ENCODE measurements at regions of chr17 and their contacts with region 1.

Region 1: GRCh38 chr17:76199469-76199868 is 40.8 kb downstream of the RNF157 start:
- DNase-seq: peak; percentile 39 to 93 (median 64)
- ATAC-seq: peak; percentile 98
- H3K4me3 ChIP-seq: no peak overlapping the region
- H3K4me3 Mint-ChIP-seq: peak overlapping the region; percentile 81
- H3K27ac ChIP-seq: peak overlapping the region in 1 of 2 donors; percentile 58
- H3K27ac Mint-ChIP-seq: peak overlapping the region; percentile 93
- H3K4me1 ChIP-seq: peaks cover 67% of the 10 kb centered on the region
- H3K4me1 Mint-ChIP-seq: peaks cover 71% of the 10 kb centered on the region
- H3K27me3 ChIP-seq: no peaks in the 10 kb centered on the region
- H3K27me3 Mint-ChIP-seq: no peaks in the 10 kb centered on the region
- CTCF ChIP-seq: no peak

Region 2: DNA sequence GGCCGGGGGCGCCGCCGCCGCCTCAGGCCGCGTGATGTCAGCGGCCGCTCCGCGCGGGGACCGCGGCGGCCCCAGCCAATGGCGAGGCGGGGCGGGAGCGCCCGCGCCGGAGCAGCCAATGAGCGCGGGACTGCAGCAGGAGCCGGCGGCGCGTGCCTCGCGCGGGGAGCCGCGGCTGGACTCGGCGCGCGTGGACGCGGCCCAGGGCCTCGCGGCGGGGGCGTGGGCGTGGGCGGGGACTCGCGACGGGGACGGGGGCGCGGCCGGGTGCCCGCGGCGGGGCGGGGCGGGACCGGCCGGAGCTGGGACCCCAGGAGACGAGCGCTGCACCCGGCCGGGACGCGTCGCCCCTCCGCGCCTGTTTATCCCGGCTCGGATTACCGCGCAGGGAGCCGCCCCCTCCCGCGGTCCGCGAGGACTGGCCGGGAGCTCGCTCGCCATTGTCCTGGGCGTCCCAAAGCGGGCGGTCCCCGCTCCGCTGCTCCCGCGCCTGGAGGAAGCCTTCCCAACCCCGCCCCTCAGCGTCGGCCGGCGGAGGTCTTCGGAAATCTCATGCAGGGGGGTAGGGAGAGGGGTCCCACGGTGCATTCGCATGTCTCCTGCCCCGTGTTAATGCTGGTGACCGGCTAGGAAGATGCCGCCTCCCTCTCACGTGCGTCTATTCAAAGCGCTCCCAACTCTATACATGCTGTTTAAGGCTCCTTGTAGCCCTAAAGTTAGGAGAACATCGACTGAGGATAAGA is 41.2 kb after region 1 on chr17 and contains the start of gene RNF157:
- CTCF ChIA-PET with region 1: interaction called, 4 read pairs
- POLR2A ChIA-PET with region 1: interaction called, 12 read pairs
- intact Hi-C with region 1: loop called (anchors 5 kb)
- DNase-seq: peak; percentile 39 to 90 (median 64)
- ATAC-seq: peak; percentile 91
- H3K4me3 ChIP-seq: peak within 1 kb of the TSS; percentile 86
- H3K4me3 Mint-ChIP-seq: peak within 1 kb of the TSS; percentile 89
- H3K27ac ChIP-seq: peak within 1 kb of the TSS; percentile 35 to 36
- H3K27ac Mint-ChIP-seq: peak within 1 kb of the TSS; percentile 77
- H3K4me1 ChIP-seq: peaks cover 66% of the 10 kb centered on the region
- H3K4me1 Mint-ChIP-seq: peaks cover 54% of the 10 kb centered on the region
- H3K27me3 ChIP-seq: no peaks in the 10 kb centered on the region
- H3K27me3 Mint-ChIP-seq: no peaks in the 10 kb centered on the region
- CTCF ChIP-seq: no peak
- total RNA-seq, gene RNF157: 18.5 to 21.1 TPM

Region 3: GRCh38 chr17:76271669-76272540 is 72.4 kb after region 1 on chr17:
- CTCF ChIA-PET with region 1: no interaction called
- POLR2A ChIA-PET with region 1: interaction called, 14 read pairs
- intact Hi-C with region 1: no loop called
- DNase-seq: peak in 11 of 14 experiments; percentile 23 to 89 (median 55)
- ATAC-seq: peak; percentile 25
- H3K4me3 ChIP-seq: peak overlapping the region; percentile 57
- H3K4me3 Mint-ChIP-seq: peak overlapping the region; percentile 82
- H3K27ac ChIP-seq: peak overlapping the region; percentile 82 to 86
- H3K27ac Mint-ChIP-seq: peak overlapping the region; percentile 98
- H3K4me1 ChIP-seq: peaks cover 92% of the 10 kb centered on the region
- H3K4me1 Mint-ChIP-seq: peaks cover 66% of the 10 kb centered on the region
- H3K27me3 ChIP-seq: no peaks in the 10 kb centered on the region
- H3K27me3 Mint-ChIP-seq: no peaks in the 10 kb centered on the region
- CTCF ChIP-seq: no peak

Measured in CD4-positive, alpha-beta T cell (primary cell).